Endothelial cell of umbilical vein (primary cell): ENCODE measurements at regions of chr3 and their contacts with region 1.

Region 1: GRCh38 chr3:52490939-52491526 is 4.1 kb upstream of the STAB1 start:
- DNase-seq: peak; percentile 91
- H3K4me3 ChIP-seq: no peak overlapping the region
- H3K27ac ChIP-seq: peak overlapping the region; percentile 60
- H3K4me1 ChIP-seq: peaks cover 64% of the 10 kb centered on the region
- H3K27me3 ChIP-seq: no peaks in the 10 kb centered on the region
- CTCF ChIP-seq: no peak
- POLR2A ChIP-seq: peak; percentile 21

Region 2: DNA sequence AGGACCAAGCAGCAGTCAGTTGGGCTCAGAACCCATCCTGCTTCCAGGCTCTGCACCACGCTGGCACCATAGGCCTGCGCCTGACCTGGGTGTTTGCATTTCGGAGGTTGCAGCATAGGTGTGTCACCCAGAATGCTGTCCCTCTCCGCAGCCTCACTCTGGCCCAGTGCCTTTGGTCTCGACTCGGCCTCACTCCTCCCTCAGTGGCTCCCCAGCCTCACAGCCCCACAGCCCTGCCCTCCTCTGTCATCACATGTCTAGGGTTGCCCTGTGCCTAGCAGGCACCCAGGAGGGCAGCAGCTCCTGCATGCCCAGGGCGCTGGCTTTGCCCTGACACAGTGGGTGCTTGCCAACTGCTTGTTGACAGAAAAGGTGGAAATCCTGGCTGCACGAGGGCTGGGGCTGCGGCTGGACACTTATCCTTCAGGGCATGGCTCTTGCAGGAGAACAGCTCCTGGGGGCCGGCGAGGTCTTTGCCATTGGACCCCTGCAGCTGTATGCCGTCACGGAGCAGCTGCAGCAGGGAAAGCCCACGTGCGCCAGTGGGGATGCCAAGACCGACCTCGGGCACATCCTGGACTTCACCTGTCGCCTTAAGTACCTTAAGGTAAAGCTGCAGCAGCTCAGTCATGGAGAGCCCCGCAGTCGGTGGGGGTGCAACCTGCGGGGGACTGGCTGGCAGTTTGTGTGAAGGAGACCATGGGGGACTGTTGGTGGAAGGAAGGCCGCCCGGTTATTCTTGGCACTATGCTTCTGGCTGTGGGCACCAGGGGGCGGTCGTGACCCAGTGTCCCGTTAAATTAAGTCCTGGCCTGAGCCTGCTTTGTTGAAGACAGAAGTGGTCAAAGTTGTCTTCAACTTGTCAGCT is 19.4 kb before region 1 on chr3:
- CTCF ChIA-PET with region 1: interaction called, 29 read pairs
- POLR2A ChIA-PET with region 1: no interaction called
- dilution Hi-C with region 1: no loop called
- intact Hi-C with region 1: loop called (anchors 1 kb)
- DNase-seq: peak; percentile 74
- H3K4me3 ChIP-seq: no peak overlapping the region
- H3K27ac ChIP-seq: no peak overlapping the region
- H3K4me1 ChIP-seq: no peaks in the 10 kb centered on the region
- H3K27me3 ChIP-seq: no peaks in the 10 kb centered on the region
- CTCF ChIP-seq: peak; percentile 75 to 86
- POLR2A ChIP-seq: no peak

Region 3: DNA sequence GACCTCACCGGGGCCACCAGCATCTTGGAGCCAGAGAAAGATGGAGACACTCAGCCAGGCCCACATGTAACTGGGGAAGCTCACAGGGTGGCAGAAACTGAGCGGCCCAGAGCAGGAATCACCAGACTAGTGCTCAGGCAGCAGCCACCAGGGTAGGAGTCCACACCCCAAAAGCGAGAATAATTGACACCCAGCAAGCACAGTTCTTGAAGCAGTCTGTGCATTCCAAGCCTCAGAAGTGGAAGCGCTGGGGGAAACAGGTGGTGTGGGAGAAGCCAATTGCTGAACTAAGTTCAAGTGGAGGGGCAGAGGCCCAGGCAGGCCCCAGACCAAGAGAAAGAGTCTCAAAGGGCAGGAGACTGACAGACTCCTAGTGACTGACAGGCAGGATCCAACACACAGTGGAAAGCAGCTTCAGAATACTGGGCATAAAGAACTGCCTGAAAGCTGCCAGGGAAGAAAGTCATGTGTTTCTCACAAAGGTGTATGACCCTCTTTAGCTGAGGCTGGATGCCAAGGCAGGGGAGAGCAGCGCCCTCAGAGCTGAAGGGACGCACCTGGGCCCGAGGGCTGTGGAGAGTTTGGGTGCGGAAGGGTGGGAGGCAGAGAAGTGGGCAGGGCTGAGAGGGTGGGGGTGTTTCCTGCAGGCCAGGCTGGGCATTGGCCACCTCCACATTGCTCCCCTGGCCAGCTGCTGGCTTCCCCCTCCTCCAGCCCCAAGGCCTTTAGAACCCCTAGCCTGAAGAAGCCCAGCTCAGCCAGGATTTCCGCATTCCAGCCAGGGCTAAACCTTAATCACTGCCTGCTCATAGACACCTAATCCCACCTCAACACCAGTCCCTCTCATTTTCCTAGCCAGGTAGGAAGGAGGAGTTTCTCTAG is 34.9 kb after region 1 on chr3:
- CTCF ChIA-PET with region 1: no interaction called
- POLR2A ChIA-PET with region 1: no interaction called
- dilution Hi-C with region 1: no loop called
- intact Hi-C with region 1: loop called (anchors 1 kb)
- DNase-seq: no peak
- H3K4me3 ChIP-seq: no peak overlapping the region
- H3K27ac ChIP-seq: no peak overlapping the region
- H3K4me1 ChIP-seq: peaks cover 19% of the 10 kb centered on the region
- H3K27me3 ChIP-seq: no peaks in the 10 kb centered on the region
- CTCF ChIP-seq: no peak
- POLR2A ChIP-seq: peak; percentile 68